Heart left ventricle (tissue), 16 donors: ENCODE measurements at regions of chr19 and their contacts with region 1.

Region 1: DNA sequence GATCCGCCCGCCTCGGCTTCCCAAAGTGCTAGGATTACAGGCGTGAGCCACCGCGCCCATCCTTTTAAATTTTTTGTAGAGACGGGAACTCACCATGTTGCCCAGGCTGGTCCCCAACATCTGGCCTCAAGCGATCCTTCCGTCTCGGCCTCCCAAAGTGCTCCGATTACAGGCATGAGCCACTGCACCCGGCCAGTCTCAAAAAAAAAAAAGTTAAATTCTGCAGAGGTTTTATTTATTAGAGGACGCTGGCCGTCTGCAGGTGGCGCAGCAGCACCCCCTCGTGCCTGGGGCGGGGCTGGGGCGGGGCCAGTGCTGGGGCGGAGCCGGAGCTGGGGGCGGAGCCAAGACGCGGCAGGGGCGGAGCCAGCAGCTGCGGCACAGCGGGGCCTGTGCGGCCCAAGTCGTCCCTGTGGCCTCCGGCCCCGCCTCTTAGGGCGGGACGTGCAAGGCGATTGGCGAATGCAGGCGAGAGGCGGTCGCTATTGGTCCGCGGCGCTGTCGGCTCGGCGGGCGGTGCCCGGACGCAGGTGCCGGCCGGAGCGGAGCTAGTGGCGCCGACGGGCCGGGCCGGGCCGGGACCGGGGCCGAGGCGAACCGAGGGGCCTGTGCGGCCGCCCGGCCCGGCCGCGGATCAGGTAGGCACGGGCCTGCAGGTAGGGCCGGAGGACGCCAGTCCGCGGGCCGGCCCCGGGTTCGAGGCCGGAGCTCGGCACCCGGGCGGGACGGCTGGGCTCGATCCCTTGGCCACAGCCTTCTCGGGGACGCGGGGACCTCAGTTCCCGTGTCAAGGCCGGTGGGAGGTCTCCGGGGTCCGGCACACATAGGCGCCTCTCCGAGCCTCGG is at the start of gene MARCHF2:
- DNase-seq: peak; percentile 96 to 99 (median 98)
- ATAC-seq: peak; percentile 98 to 99 (median 99)
- H3K4me3 ChIP-seq: peak within 1 kb of the TSS; percentile 71 to 98 (median 90)
- H3K27ac ChIP-seq: peak within 1 kb of the TSS; percentile 76 to 95 (median 84)
- H3K4me1 ChIP-seq: peaks cover 0 to 55% (median 37%) of the 10 kb centered on the region in 12 donors
- H3K27me3 ChIP-seq: no peaks in the 10 kb centered on the region
- CTCF ChIP-seq: peak; percentile 60 to 88 (median 79)
- POLR2A ChIP-seq: peak; percentile 17 to 81
- total RNA-seq, gene MARCHF2: 67.2 to 308 (median 93.7) TPM

Region 2: GRCh38 chr19:8444645-8445487 is 31.9 kb after region 1 on chr19 and contains the start of gene HNRNPM:
- intact Hi-C with region 1: loop called in 7 of 10 experiments (anchors 2 to 5 kb)
- DNase-seq: peak; percentile 100
- ATAC-seq: peak; percentile 94 to 98 (median 98)
- H3K4me3 ChIP-seq: peak within 1 kb of the TSS; percentile 71 to 100 (median 97)
- H3K27ac ChIP-seq: peak within 1 kb of the TSS; percentile 82 to 99 (median 96)
- H3K4me1 ChIP-seq: peaks cover 14 to 47% (median 40%) of the 10 kb centered on the region in 12 donors
- H3K27me3 ChIP-seq: no peaks in the 10 kb centered on the region
- CTCF ChIP-seq: no peak
- POLR2A ChIP-seq: peak; percentile 32 to 88
- total RNA-seq, gene HNRNPM: 46.7 to 111 (median 95.3) TPM

Region 3: DNA sequence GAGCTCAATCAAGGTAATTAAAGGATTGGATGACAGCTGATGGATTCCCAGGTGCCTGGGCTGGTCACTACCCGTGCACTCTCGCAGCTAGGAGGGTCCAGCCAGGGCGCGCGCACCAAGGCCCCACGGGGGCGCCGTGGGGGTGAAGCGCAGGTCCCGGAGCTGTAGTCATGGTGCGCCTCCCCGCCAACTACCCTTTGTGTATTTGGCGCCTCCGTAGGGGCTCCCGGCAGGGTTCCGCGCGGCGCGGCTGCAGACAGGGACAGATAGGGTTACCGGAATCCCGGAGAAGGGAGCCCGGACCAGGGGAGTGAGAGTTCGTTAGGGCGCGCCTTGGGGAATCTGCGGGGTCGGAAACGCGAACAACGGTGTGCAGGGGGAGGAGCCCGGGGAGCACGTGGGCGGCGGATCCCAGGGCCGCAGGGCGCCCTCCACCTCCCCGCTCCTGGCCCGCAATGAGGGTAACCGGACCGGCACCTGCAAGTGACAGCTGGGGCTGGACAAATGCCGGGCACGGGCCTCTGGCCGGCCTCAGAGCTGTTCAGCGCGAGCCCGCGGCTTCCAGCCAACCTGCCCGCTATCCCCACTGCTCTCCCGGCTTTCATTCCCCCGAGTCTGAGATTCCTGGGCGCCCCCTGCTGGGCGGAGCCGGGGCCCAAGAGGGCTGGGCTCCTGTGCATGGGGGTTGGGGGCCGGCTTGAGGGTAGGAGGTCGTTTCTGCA is 92.8 kb after region 1 on chr19:
- intact Hi-C with region 1: loop called in 7 of 10 experiments (anchors 2 to 10 kb)
- DNase-seq: peak; percentile 79 to 90 (median 81)
- ATAC-seq: peak; percentile 73 to 89 (median 84)
- H3K4me3 ChIP-seq: peak overlapping the region; percentile 19 to 84 (median 60)
- H3K27ac ChIP-seq: peak overlapping the region in 6 of 12 donors; percentile 14 to 58 (median 30)
- H3K4me1 ChIP-seq: peaks cover 0 to 51% (median 10%) of the 10 kb centered on the region in 12 donors
- H3K27me3 ChIP-seq: no peaks in the 10 kb centered on the region
- CTCF ChIP-seq: peak; percentile 82 to 93 (median 88)
- POLR2A ChIP-seq: peak in 1 of 2 donors; percentile 17

Region 4: GRCh38 chr19:8513687-8514504 is 100.9 kb after region 1 on chr19 and contains the start of gene ZNF414:
- intact Hi-C with region 1: loop called in 4 of 10 experiments (anchors 5 to 10 kb)
- DNase-seq: peak; percentile 97 to 98 (median 97)
- ATAC-seq: peak; percentile 93 to 96 (median 95)
- H3K4me3 ChIP-seq: peak within 1 kb of the TSS; percentile 19 to 94 (median 86)
- H3K27ac ChIP-seq: peak within 1 kb of the TSS; percentile 95 to 100 (median 99)
- H3K4me1 ChIP-seq: peaks cover 8 to 62% (median 17%) of the 10 kb centered on the region in 12 donors
- H3K27me3 ChIP-seq: no peaks in the 10 kb centered on the region
- CTCF ChIP-seq: peak in 1 of 12 donors; percentile 6
- POLR2A ChIP-seq: peak in 1 of 2 donors; percentile 82
- total RNA-seq, gene ZNF414: 5.6 to 17.2 (median 13.7) TPM